A549 (cell line): ENCODE measurements at regions of chr2 and their contacts with region 1.

Region 1: GRCh38 chr2:38554973-38555595 is 47.6 kb downstream of the HNRNPLL start:
- DNase-seq: peak; percentile 31 to 54
- ATAC-seq: peak; percentile 87 to 89
- H3K4me3 ChIP-seq: no peak overlapping the region
- H3K27ac ChIP-seq: no peak overlapping the region
- H3K4me1 ChIP-seq: no peaks in the 10 kb centered on the region
- CTCF ChIP-seq: peak; percentile 58
- EP300 ChIP-seq: no peak
- POLR2A ChIP-seq: no peak
- RAD21 ChIP-seq: peak; percentile 37; a peak in 3 of 5 replicates

Region 2: DNA sequence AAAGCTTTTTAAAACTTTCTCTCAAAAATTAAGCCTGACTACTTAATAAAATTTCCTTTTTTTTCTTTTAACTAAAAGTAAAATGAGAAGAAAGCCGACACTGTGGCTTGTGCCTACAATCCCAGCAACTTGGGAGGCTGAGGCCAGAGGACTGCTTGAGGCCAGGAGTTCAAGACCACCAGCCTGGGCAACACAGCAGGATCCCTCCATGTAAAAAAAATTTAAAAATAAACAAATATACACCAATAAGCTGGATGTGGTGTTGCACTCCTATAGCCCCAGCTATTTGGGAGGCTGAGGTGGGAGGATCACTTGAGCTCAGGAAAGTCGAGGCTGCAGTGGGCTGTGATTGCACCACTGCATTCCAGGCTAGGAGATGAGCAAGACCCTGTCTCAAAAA is 10.2 kb after region 1 on chr2:
- CTCF ChIA-PET with region 1: interaction called, 48 read pairs
- POLR2A ChIA-PET with region 1: no interaction called
- DNase-seq: no peak
- ATAC-seq: no peak
- H3K4me3 ChIP-seq: no peak overlapping the region
- H3K27ac ChIP-seq: no peak overlapping the region
- H3K4me1 ChIP-seq: 0 out of 3 replicates have a peak, but pooled peaks cover 3% of the 10 kb centered on the region
- CTCF ChIP-seq: no peak
- EP300 ChIP-seq: no peak
- POLR2A ChIP-seq: no peak
- RAD21 ChIP-seq: no peak

Region 3: DNA sequence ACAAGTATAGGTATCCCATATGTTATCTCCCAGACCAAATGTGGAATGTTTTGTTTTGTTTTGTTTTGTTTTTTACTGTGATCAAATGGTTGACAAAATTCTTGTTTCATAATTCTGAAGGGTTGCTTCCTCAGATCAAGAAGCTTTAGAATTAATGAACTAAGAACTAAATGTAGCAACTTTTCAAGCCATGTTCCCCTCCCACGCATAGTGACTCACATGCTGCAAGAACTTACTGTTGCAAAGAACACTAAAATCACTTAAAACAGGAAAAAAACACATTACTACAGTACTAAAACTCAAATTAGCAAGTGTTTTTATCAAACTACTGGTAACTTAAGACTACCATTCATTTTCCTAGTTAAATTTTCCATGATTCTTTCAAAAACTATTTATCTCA is 17.1 kb after region 1 on chr2:
- CTCF ChIA-PET with region 1: interaction called, 48 read pairs
- POLR2A ChIA-PET with region 1: no interaction called
- DNase-seq: no peak
- ATAC-seq: no peak
- H3K4me3 ChIP-seq: no peak overlapping the region
- H3K27ac ChIP-seq: no peak overlapping the region
- H3K4me1 ChIP-seq: 0 out of 3 replicates have a peak, but pooled peaks cover 3% of the 10 kb centered on the region
- CTCF ChIP-seq: no peak
- EP300 ChIP-seq: no peak
- POLR2A ChIP-seq: no peak
- RAD21 ChIP-seq: no peak

Region 4: DNA sequence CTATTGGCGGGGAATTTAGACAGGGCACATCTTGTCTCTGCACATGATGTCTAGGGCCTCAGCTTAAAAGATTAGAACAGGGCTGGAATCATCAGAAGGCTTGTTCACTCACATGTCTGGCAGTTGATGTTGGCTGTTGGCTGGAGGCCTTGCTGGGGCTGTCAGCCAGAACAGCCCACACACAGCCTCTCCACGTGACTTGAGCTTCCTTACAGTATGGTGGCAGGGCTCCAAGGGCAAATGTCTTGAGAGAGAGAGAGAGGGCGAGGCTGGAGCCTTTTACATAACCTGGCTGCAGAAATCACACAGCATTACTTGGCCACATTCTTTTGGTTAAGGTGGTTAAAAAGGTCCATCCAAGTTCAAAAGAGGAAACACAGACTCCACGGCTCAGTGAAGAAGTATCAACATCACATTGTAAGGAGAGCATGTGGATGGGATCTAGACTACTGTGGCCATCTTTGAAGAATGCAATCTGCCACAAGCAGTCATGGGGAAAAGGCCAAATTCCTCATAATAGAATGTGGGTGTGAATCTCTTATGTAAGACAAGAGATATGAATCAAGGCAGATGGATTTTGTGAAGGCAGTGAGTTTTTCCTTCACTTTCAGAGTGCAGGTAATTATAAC is 165.6 kb after region 1 on chr2:
- CTCF ChIA-PET with region 1: interaction called, 16 read pairs
- POLR2A ChIA-PET with region 1: no interaction called
- DNase-seq: peak in 1 of 2 experiments; percentile 70
- ATAC-seq: peak in 1 of 2 experiments; percentile 23; a peak in 3 of 6 replicates
- H3K4me3 ChIP-seq: no peak overlapping the region
- H3K27ac ChIP-seq: peak overlapping the region in 1 of 2 experiments; percentile 38; a peak in 2 of 6 replicates
- H3K4me1 ChIP-seq: peaks cover 30% of the 10 kb centered on the region
- CTCF ChIP-seq: no peak
- EP300 ChIP-seq: no peak
- POLR2A ChIP-seq: no peak
- RAD21 ChIP-seq: no peak

Region 5: GRCh38 chr2:38740851-38741731 is 186.0 kb after region 1 on chr2:
- CTCF ChIA-PET with region 1: interaction called, 22 read pairs
- POLR2A ChIA-PET with region 1: interaction called, 4 read pairs
- DNase-seq: peak; percentile 61 to 73
- ATAC-seq: peak; percentile 60 to 64; a peak in 5 of 6 replicates
- H3K4me3 ChIP-seq: no peak overlapping the region
- H3K27ac ChIP-seq: no peak overlapping the region
- H3K4me1 ChIP-seq: peaks cover 24% of the 10 kb centered on the region
- CTCF ChIP-seq: peak; percentile 80
- EP300 ChIP-seq: no peak
- POLR2A ChIP-seq: no peak
- RAD21 ChIP-seq: peak; percentile 48 to 74